Activated CD4-positive, alpha-beta T cell treated with anti-CD3 and anti-CD28 coated beads for 36 hours (primary cell): ENCODE measurements at regions of chr18 and their contacts with region 1.

Region 1: DNA sequence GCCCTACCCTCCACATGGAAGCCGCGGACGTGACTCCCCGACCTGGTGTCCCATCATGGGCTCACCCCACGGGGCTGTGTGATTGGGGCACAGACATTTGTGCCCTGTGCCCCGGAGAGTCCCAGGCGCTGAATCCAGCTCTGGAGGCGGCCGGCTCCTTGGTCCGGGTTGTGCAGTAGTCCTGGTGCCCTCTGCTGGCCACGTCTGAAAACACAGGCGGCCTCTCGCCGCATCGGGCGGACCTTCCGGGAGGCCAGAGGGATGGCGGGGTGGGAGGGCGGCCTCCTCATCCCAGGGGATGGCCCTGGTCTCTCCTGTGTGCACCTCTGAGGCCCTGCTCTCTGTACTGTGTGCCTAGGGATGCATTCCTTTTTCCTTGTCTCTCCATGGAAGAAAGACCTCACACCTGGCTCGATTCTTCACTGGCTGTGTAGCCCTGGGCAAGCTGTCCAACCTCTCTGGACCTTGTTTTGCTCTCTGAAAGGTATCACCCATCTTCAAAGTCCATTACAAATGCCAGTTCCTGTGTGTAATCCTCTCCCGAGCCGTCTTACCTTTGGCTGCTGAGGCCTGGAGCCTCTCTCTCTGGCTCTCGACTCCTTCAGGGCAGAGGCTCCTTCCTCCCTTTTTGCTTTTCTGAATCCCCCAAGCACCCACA is 27.6 kb downstream of the CELF4 start:
- DNase-seq: peak; percentile 77
- ATAC-seq: peak; percentile 51
- H3K4me3 Mint-ChIP-seq: no peak overlapping the region
- H3K27ac Mint-ChIP-seq: no peak overlapping the region
- H3K4me1 Mint-ChIP-seq: peaks cover 3% of the 10 kb centered on the region
- H3K27me3 Mint-ChIP-seq: peaks cover 27% of the 10 kb centered on the region

Region 2: GRCh38 chr18:37270038-37270665 is 267.8 kb before region 1 on chr18:
- CTCF ChIA-PET with region 1: no interaction called
- POLR2A ChIA-PET with region 1: no interaction called
- intact Hi-C with region 1: no loop called
- DNase-seq: peak; percentile 62
- ATAC-seq: no peak
- H3K4me3 Mint-ChIP-seq: no peak overlapping the region
- H3K27ac Mint-ChIP-seq: no peak overlapping the region
- H3K4me1 Mint-ChIP-seq: no peaks in the 10 kb centered on the region
- H3K27me3 Mint-ChIP-seq: peaks cover 10% of the 10 kb centered on the region

Region 3: DNA sequence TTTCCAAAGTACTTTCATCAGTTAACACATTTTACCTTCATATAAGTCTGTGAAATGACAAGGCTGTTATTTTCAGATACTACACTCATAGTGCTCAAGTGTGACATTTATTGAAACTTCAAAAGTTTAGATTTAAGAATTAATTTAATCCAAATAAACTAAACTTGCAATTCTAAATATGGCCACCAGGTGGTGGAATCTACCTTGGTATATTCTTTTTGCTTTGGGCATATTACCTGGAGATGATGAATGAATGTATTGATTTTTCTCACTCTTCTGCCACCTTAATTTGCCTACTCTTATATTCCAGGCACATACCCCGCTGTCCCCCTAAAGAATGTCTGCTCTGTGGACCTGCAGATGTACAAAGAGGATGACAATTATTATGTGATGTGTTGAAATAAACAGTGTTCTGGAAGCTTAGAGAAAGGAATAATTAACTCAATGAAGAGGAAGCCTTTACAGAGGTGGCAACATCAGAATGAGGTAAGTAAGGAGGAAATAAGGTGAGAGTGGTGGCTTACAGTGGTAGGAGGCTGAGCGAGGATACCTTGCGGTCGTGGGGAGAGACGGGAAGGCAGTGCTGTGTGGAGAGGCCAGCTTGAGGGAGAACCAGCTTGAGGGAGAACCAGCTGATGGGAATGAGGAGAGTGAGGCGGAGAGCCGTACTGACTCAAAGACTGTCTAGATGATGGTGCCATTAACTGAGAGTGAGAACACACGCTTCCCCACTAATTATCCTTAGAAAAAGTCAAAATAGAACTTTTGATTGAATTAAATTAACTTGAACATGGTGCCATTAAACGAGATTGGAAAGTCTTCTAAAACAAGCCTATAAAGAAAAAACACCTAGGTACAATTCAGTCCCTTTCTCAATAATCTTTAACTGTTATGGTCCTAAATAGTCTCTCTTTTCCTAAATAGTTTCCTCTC is 151.9 kb before region 1 on chr18:
- CTCF ChIA-PET with region 1: interaction called, 4 read pairs
- POLR2A ChIA-PET with region 1: no interaction called
- intact Hi-C with region 1: loop called (anchors 1 kb)
- DNase-seq: no peak
- ATAC-seq: no peak
- H3K4me3 Mint-ChIP-seq: no peak overlapping the region
- H3K27ac Mint-ChIP-seq: no peak overlapping the region
- H3K4me1 Mint-ChIP-seq: no peaks in the 10 kb centered on the region
- H3K27me3 Mint-ChIP-seq: peaks cover 2% of the 10 kb centered on the region

Region 4: GRCh38 chr18:37445368-37445767 is 92.6 kb before region 1 on chr18:
- CTCF ChIA-PET with region 1: no interaction called
- POLR2A ChIA-PET with region 1: no interaction called
- intact Hi-C with region 1: loop called (anchors 1 to 2 kb)
- DNase-seq: no peak
- ATAC-seq: no peak
- H3K4me3 Mint-ChIP-seq: no peak overlapping the region
- H3K27ac Mint-ChIP-seq: no peak overlapping the region
- H3K4me1 Mint-ChIP-seq: no peaks in the 10 kb centered on the region
- H3K27me3 Mint-ChIP-seq: no peaks in the 10 kb centered on the region

Region 5: GRCh38 chr18:37476182-37476581 is 61.8 kb before region 1 on chr18:
- CTCF ChIA-PET with region 1: no interaction called
- POLR2A ChIA-PET with region 1: no interaction called
- intact Hi-C with region 1: no loop called
- DNase-seq: peak; percentile 62
- ATAC-seq: peak; percentile 33
- H3K4me3 Mint-ChIP-seq: no peak overlapping the region
- H3K27ac Mint-ChIP-seq: no peak overlapping the region
- H3K4me1 Mint-ChIP-seq: no peaks in the 10 kb centered on the region
- H3K27me3 Mint-ChIP-seq: peaks cover 7% of the 10 kb centered on the region

Region 6: DNA sequence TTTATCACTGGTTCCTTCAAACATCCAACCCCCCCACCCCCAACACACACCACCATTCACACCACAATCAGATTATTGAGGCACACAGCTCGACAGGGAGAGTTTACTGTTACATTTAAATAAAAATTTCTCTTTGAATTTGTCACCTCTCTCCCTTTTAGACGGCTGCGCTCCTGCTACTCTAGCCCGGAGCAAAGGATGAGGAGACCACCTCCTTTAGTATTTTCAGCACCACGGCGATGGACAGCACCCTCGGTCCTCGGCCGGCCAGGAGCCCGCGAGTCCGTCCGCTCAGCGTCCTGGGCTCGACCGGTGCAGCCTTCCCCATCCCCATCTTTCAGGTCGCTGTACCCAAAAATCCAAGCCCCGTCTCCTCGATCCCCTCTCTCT is 26.7 kb after region 1 on chr18:
- CTCF ChIA-PET with region 1: no interaction called
- POLR2A ChIA-PET with region 1: no interaction called
- intact Hi-C with region 1: no loop called
- DNase-seq: peak; percentile 38
- ATAC-seq: no peak
- H3K4me3 Mint-ChIP-seq: no peak overlapping the region
- H3K27ac Mint-ChIP-seq: no peak overlapping the region
- H3K4me1 Mint-ChIP-seq: peaks cover 16% of the 10 kb centered on the region
- H3K27me3 Mint-ChIP-seq: peaks cover 44% of the 10 kb centered on the region

Region 7: DNA sequence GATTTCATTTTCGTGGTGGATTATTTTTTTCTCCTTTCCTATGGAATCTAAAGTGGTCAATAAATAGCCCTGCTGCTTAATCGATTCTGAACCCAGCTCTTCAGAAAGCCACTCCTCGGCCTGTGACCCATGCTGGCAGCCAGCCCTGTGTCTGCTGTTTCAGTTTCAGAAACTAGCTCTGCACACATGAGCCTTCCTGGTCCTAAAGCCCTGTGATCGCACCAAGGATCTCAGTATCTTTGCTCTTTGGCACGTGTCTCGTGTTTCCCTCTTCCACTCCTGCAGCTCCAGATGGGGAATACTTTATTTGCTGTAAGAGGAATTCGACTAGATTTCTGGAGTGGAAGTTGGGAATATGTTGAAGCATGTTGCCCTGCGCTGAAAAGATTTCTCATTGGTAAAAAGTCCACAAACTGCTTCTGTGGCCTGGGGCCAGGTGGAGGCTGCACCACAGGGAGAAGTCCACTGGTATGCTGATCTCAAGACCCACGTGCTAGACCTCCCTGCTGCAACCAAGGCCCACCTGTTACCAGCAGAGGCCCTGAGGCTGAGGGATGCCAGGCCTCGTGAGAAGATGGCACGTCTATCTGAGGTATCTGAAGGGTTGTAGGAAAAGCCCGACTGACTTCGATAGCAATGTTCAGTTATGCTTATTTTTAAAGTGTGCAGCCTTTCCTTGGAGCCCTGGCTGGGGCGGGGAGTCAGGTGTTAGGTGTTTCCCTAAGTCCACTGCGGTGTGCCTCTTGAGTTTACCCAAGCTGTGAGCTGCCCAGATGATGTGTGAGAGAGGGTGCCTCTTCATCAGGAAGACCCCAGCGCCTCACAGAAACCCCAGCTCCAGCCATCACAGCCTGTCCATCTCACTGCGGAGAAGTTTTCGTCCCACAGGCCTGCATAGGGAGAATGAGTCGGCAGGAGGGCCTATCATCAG is 61.2 kb after region 1 on chr18:
- CTCF ChIA-PET with region 1: no interaction called
- POLR2A ChIA-PET with region 1: no interaction called
- intact Hi-C with region 1: loop called in 1 of 2 experiments (anchors 10 kb)
- DNase-seq: no peak
- ATAC-seq: no peak
- H3K4me3 Mint-ChIP-seq: no peak overlapping the region
- H3K27ac Mint-ChIP-seq: no peak overlapping the region
- H3K4me1 Mint-ChIP-seq: no peaks in the 10 kb centered on the region
- H3K27me3 Mint-ChIP-seq: no peaks in the 10 kb centered on the region